ENCODE measurements at regions of chr16 and their contacts with region 1.

Region 1: GRCh38 chr16:21599233-21600030 is at the start of gene METTL9:
- DNase-seq: peak; percentile 93
- H3K4me3 Mint-ChIP-seq: peak within 1 kb of the TSS; percentile 87
- H3K27ac Mint-ChIP-seq: peak within 1 kb of the TSS; percentile 92
- H3K4me1 Mint-ChIP-seq: peaks cover 41% of the 10 kb centered on the region
- H3K27me3 Mint-ChIP-seq: no peaks in the 10 kb centered on the region
- total RNA-seq, gene METTL9: 73.9 and 75.8 TPM in 2 replicates

Region 2: DNA sequence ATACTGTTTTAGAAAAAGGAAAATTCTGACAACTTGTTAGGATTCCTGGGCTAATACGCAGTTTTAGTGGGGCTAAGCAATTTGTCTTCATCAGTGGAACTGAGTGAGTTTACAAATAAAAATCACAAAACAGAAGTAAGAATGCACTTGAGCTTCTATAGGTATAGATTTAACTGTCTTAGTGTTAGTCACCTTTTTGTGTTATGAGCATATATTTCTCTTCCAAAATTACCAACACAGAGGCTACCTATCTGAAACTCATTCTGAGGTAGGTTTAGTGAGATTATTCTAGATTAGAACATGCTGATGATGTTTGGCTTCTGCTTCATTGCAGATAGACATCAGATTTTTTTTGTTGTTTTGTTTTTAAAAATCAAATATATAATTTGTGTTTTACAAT is 23.1 kb after region 1 on chr16:
- intact Hi-C with region 1: loop called (anchors 2 kb)
- DNase-seq: no peak
- H3K4me3 Mint-ChIP-seq: no peak overlapping the region
- H3K27ac Mint-ChIP-seq: no peak overlapping the region
- H3K4me1 Mint-ChIP-seq: peaks cover 56% of the 10 kb centered on the region
- H3K27me3 Mint-ChIP-seq: no peaks in the 10 kb centered on the region

Region 3: GRCh38 chr16:21646721-21647561 is 47.5 kb after region 1 on chr16:
- intact Hi-C with region 1: loop called (anchors 1 kb)
- DNase-seq: peak; percentile 76
- H3K4me3 Mint-ChIP-seq: peak overlapping the region; percentile 58
- H3K27ac Mint-ChIP-seq: peak overlapping the region; percentile 91
- H3K4me1 Mint-ChIP-seq: peaks cover 48% of the 10 kb centered on the region
- H3K27me3 Mint-ChIP-seq: no peaks in the 10 kb centered on the region

Measured in activated T-helper 2 cell treated with anti-CD3 and anti-CD28 coated beads, Interferon-gamma antibody, Interleukin-2, Interleukin-4, amounts not matched to agents 10 μg/mL and 5 μg/mL and 100 μg/mL, durations not matched to agents 14 hours and 24 hours and 36 hours (primary cell).